B cell (primary cell): ENCODE measurements at regions of chr17 and their contacts with region 1.

Region 1: GRCh38 chr17:19507775-19508576 is 25.7 kb upstream of the SLC47A1 start:
- DNase-seq: peak; percentile 90
- ATAC-seq: peak; percentile 75
- H3K4me3 ChIP-seq: peak overlapping the region; percentile 57 to 98 (median 89)
- H3K4me3 Mint-ChIP-seq: peak overlapping the region; percentile 90
- H3K27ac ChIP-seq: peak overlapping the region; percentile 31 to 66
- H3K27ac Mint-ChIP-seq: peak overlapping the region; percentile 97
- H3K4me1 ChIP-seq: peaks cover 5 to 9% of the 10 kb centered on the region in 2 donors
- H3K4me1 Mint-ChIP-seq: peaks cover 9% of the 10 kb centered on the region
- H3K27me3 ChIP-seq: no peaks in the 10 kb centered on the region
- H3K27me3 Mint-ChIP-seq: no peaks in the 10 kb centered on the region
- CTCF ChIP-seq: no peak

Region 2: GRCh38 chr17:19260958-19261357 is 247.0 kb before region 1 on chr17:
- CTCF ChIA-PET with region 1: no interaction called
- POLR2A ChIA-PET with region 1: no interaction called
- intact Hi-C with region 1: no loop called
- DNase-seq: no peak
- ATAC-seq: no peak
- H3K4me3 ChIP-seq: no peak overlapping the region
- H3K4me3 Mint-ChIP-seq: no peak overlapping the region
- H3K27ac ChIP-seq: no peak overlapping the region
- H3K27ac Mint-ChIP-seq: no peak overlapping the region
- H3K4me1 ChIP-seq: no peaks in the 10 kb centered on the region
- H3K4me1 Mint-ChIP-seq: peaks cover 13% of the 10 kb centered on the region
- H3K27me3 ChIP-seq: peaks cover 0 to 6% (median 0%) of the 10 kb centered on the region in 4 experiments
- H3K27me3 Mint-ChIP-seq: peaks cover 9% of the 10 kb centered on the region
- CTCF ChIP-seq: no peak

Region 3: DNA sequence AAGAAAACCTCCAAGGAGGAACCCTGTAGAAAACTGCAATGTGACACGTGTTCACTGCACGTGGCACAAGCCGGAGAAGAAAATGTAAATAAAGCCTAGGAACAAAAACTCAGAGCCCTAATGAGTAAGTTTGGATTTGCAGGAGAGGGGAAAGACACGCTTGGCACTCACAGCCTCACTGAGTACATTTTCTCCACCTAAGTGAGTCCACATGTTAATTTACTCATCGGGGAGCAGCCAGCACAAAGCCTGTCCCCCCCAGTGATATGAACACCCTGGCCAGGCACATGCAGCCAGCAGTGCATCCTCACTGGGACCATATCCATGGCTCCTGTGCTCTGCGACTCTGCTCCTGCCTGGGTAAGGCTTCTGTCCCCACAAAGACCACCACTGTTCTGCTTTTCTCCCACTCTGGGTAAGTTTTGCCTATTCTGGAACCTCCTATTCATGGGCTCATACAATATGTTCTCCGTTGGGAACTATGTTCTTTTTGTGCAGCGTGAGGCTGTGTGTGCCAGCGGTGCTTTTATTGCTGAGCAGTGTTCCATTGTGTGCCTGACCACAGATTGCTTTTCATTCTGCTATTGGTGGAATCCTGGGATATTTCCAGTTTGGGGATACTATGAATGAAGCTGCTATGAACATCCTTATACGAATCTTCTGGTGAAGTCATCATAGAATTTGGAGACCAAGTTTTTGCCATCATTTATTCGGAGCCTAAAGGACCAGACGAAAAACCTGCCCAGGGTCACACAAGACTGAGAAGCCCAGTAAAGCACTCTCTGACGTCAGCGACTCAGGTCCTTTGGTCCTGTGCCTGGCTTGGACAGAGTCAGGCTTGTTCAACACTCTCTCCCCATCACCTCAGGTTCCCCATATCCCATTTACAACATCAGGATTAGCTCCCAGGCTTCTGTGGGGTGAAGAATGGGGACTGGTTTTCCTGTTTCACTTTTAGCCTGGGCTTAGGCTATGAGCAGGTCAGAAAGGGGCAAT is 43.6 kb before region 1 on chr17:
- CTCF ChIA-PET with region 1: no interaction called
- POLR2A ChIA-PET with region 1: no interaction called
- intact Hi-C with region 1: loop called (anchors 1 kb)
- DNase-seq: no peak
- ATAC-seq: no peak
- H3K4me3 ChIP-seq: peak overlapping the region in 1 of 5 experiments; percentile 25
- H3K4me3 Mint-ChIP-seq: peak overlapping the region; percentile 74
- H3K27ac ChIP-seq: peak overlapping the region; percentile 78 to 86
- H3K27ac Mint-ChIP-seq: peak overlapping the region; percentile 91
- H3K4me1 ChIP-seq: peaks cover 47 to 54% of the 10 kb centered on the region in 2 donors
- H3K4me1 Mint-ChIP-seq: peaks cover 48% of the 10 kb centered on the region
- H3K27me3 ChIP-seq: no peaks in the 10 kb centered on the region
- H3K27me3 Mint-ChIP-seq: no peaks in the 10 kb centered on the region
- CTCF ChIP-seq: no peak